ENCODE measurements at regions of chr12 and their contacts with region 1.

Region 1: DNA sequence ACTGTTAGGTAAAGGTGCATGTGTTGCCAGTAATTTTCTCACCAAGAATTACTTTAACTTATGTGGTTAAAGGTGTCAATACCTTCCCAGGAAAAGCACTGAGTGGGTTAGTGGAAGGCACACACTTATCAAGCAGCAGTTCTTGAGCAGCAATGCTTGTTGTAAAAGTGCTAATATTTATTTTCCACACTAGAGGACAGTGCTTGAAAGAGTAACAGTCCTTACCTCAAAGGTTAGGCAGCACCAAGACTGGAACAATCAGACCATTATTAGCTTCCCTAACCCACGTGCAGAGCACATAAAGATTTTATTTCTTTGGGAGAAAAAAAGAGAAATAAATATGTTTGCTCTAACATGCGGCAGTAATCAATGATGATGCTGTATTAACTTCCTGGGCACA is 48.8 kb upstream of the KRR1 start:
- DNase-seq: no peak
- H3K4me3 Mint-ChIP-seq: no peak overlapping the region
- H3K27ac Mint-ChIP-seq: no peak overlapping the region
- H3K4me1 Mint-ChIP-seq: peaks cover 17% of the 10 kb centered on the region
- H3K27me3 Mint-ChIP-seq: no peaks in the 10 kb centered on the region
- CTCF ChIP-seq: no peak

Region 2: DNA sequence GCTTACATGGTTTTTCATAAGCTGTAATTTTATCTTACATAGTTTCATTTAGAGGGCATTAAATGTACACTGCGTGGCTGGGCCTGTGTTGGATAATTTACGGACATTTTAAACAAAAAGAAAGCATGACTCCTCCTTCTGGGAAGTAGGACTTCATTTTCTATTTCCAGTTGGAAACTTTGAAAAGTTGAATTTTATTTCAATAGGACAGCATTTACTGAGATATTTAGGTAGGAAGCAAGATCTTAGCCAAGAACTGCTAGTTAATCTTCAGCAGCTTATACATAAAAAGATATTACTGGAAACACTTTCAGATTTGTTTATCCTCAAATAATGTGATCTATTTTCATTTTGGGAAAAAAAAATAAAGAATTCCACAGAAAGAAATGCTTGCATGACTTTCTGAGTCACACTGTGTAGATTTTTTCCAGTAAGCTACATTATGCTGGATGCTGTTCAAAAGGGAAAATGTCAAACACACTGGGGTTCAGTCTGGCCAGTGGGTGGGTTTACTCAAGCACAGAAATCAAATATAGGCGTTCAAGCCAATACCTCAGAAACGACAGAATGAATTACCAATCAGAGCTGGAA is 190.6 kb after region 1 on chr12:
- CTCF ChIA-PET with region 1: no interaction called
- intact Hi-C with region 1: loop called (anchors 5 kb)
- DNase-seq: no peak
- H3K4me3 Mint-ChIP-seq: no peak overlapping the region
- H3K27ac Mint-ChIP-seq: peak overlapping the region; percentile 36
- H3K4me1 Mint-ChIP-seq: peaks cover 69% of the 10 kb centered on the region
- H3K27me3 Mint-ChIP-seq: no peaks in the 10 kb centered on the region
- CTCF ChIP-seq: no peak

Region 3: GRCh38 chr12:75766263-75767160 is 206.3 kb after region 1 on chr12:
- CTCF ChIA-PET with region 1: no interaction called
- intact Hi-C with region 1: loop called (anchors 1 kb)
- DNase-seq: peak; percentile 63
- H3K4me3 Mint-ChIP-seq: no peak overlapping the region
- H3K27ac Mint-ChIP-seq: peak overlapping the region; percentile 73
- H3K4me1 Mint-ChIP-seq: peaks cover 60% of the 10 kb centered on the region
- H3K27me3 Mint-ChIP-seq: no peaks in the 10 kb centered on the region
- CTCF ChIP-seq: no peak

Region 4: GRCh38 chr12:75814851-75815754 is 254.9 kb after region 1 on chr12:
- CTCF ChIA-PET with region 1: interaction called, 3 read pairs
- intact Hi-C with region 1: loop called (anchors 5 kb)
- DNase-seq: peak; percentile 38
- H3K4me3 Mint-ChIP-seq: no peak overlapping the region
- H3K27ac Mint-ChIP-seq: peak overlapping the region; percentile 37
- H3K4me1 Mint-ChIP-seq: peaks cover 41% of the 10 kb centered on the region
- H3K27me3 Mint-ChIP-seq: no peaks in the 10 kb centered on the region
- CTCF ChIP-seq: no peak

Region 5: DNA sequence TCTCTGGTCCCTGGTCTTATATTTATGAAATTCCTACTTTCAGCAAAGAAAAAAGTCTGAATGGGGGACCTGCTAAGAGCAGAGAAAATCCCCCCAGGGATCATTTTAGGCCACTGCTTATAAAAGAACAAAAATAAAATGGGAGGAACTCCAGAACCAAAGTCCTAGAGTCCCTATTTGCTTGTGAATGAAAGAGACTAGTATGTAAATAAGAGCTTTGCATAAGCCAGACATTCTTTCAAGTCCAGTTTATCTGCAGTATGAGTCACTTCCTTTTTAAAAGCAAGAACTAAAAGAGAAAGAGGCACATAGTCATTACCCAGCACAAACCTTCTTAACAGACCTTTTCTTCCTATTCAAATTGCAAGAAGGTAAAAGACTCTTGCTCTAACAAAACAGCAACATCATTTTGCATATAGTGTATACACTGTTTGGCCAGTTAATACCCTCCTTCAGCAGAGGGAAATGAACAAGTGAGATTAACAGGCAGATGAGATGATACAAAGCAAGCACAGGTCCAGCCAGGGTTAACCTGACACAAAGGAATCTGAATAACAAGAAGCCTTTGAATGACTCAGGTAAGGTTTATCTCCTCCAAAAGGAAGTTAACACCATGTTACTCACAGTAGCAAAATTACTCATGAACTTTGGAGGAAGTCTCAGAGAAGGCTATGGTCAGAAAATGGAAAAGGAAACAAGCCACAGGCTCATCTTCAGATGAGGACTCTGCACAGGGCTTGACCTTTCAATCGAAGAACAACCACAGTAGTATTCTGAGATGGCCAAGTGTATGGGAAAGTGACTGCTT is 384.1 kb after region 1 on chr12:
- CTCF ChIA-PET with region 1: no interaction called
- intact Hi-C with region 1: loop called (anchors 2 kb)
- DNase-seq: peak; percentile 44
- H3K4me3 Mint-ChIP-seq: peak overlapping the region; percentile 57
- H3K27ac Mint-ChIP-seq: peak overlapping the region; percentile 87
- H3K4me1 Mint-ChIP-seq: peaks cover 34% of the 10 kb centered on the region
- H3K27me3 Mint-ChIP-seq: no peaks in the 10 kb centered on the region
- CTCF ChIP-seq: no peak

Region 6: DNA sequence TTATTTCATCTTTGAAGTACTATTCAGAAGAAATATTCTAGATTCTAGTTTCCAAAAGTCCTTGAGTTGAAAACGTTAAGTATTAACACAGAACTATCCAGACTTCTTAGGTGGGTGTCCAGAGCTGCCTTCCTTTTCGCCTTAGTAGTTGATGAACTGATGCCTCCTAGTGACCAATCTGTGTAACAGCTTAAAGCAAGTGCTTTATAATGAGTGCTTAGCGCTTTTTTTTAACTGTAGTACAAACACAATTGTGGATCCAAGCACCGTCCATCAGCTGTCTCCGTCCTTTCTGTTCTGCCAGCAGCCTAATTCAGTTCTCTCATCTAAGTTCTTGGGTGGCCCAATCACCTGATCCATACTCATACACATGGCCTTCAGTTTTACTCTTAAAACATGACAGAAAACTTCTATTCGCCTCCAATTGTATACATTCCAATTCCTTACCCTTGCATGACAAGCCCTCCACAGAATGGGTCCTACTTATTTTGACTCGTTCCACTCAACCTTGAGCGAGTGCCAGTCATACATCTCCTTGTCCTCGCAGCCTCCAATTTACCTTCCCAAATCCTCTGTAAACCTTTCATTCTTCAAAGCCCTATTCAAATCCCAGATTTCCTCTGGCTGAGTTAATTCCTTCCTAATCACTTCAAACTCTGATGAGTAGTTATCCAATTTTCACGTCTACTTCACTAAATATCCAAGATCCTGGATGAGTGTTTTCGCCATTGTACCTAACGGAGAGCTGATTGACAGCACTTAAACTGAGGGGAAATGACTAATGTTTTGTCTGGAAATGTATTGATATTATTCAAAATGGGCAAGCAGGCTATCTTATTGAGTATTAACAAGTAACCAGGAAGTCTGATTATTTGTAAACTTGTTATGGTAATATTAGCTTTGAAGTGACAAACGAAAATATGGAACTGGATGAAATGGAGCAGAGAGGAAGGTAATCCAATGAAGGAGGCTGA is 477.2 kb after region 1 on chr12:
- CTCF ChIA-PET with region 1: interaction called, 11 read pairs
- intact Hi-C with region 1: loop called (anchors 1 kb)
- DNase-seq: peak; percentile 52
- H3K4me3 Mint-ChIP-seq: peak overlapping the region; percentile 0
- H3K27ac Mint-ChIP-seq: peak overlapping the region; percentile 31
- H3K4me1 Mint-ChIP-seq: peaks cover 57% of the 10 kb centered on the region
- H3K27me3 Mint-ChIP-seq: no peaks in the 10 kb centered on the region
- CTCF ChIP-seq: peak; percentile 71

Measured in Calu3 (cell line).